ENCODE measurements at regions of chr11 and their contacts with region 1.

Region 1: DNA sequence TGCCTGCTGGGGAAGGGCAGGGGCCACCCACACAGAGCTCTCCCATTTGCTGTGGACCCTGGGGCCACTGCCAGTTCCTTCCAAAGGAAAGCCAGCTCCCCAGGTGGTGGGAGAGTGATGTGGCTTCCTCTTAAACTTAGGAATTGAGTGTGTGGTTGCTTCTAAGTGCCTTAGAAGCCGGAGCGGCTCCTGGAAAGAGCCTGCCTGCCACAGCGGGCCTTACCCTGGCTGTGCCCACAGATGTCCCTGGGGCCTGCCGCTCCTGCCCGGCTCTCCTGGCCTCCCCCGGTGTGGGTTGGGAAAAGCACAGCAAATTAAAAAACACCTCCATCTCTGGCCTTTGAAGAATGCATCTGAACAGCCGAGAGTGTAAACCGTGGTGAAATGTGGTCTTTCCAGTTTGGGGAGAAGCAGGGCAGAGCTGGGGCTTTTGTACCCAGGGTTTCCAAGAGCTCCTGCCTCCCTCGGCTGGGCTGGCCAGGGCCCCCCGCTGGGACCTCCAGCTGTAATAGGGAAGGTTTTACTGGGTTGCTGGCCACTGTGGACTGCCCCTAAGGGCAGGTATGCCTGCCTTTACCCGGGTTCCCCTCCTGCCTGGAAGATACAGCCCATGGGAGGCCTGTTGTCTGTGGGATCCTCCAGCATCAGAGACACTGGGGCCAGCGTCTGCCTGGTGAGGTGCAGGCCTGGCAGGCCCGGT is 30.2 kb downstream of the LRP5 start:
- DNase-seq: peak; percentile 96 to 99
- H3K4me3 ChIP-seq: peak overlapping the region; percentile 44; the same call in 1 of the 2 replicates
- H3K27ac ChIP-seq: peak overlapping the region; percentile 89
- H3K4me1 ChIP-seq: peaks cover 74% of the 10 kb centered on the region
- H3K27me3 ChIP-seq: no peaks in the 10 kb centered on the region
- CTCF ChIP-seq: no peak

Region 2: GRCh38 chr11:68271781-68272608 is 70.6 kb before region 1 on chr11 and contains the start of gene C11orf24:
- CTCF ChIA-PET with region 1: no interaction called
- POLR2A ChIA-PET with region 1: interaction called, 3 read pairs
- intact Hi-C with region 1: loop called (anchors 5 kb)
- DNase-seq: peak; percentile 91 to 98
- H3K4me3 ChIP-seq: peak within 1 kb of the TSS; percentile 77
- H3K27ac ChIP-seq: peak within 1 kb of the TSS; percentile 63
- H3K4me1 ChIP-seq: peaks cover 13% of the 10 kb centered on the region
- H3K27me3 ChIP-seq: no peaks in the 10 kb centered on the region
- CTCF ChIP-seq: no peak
- total RNA-seq, gene C11orf24: 27.2 and 37.7 TPM in 2 replicates

Region 3: DNA sequence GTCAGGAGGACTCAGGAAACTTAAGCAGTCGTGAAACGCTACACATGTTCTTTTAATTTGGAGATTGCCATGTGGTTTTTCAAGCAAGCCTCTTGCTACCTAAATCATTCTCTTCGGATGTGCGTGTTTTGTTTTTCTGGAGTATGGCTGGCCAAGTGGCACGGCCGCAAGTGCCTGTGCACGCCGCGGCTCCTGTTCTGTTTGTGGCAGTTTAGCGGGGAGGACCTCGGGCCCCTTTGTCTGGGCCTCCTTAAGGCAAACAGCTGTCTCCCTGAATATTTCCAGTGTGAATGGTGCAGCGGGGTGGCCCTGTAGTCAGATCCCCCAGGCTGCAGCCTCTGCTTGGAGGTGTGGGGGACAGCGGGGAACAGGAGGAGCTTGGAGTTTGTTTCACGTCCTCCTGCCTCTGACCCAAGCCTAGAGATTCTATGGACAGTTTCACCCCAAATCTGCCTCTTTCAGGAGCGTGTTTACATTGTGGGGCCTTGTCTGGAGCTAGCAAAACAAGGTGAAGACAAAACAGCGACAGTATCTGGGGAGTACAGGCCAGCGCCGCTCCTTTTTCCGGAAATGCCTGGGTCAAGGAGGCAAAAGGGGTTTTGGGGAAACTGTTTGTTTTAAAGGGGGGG is 28.9 kb before region 1 on chr11:
- CTCF ChIA-PET with region 1: no interaction called
- POLR2A ChIA-PET with region 1: interaction called, 5 read pairs
- intact Hi-C with region 1: loop called (anchors 1 kb)
- DNase-seq: no peak
- H3K4me3 ChIP-seq: peak overlapping the region; percentile 89
- H3K27ac ChIP-seq: peak overlapping the region; percentile 75
- H3K4me1 ChIP-seq: peaks cover 39% of the 10 kb centered on the region
- H3K27me3 ChIP-seq: no peaks in the 10 kb centered on the region
- CTCF ChIP-seq: no peak

Region 4: DNA sequence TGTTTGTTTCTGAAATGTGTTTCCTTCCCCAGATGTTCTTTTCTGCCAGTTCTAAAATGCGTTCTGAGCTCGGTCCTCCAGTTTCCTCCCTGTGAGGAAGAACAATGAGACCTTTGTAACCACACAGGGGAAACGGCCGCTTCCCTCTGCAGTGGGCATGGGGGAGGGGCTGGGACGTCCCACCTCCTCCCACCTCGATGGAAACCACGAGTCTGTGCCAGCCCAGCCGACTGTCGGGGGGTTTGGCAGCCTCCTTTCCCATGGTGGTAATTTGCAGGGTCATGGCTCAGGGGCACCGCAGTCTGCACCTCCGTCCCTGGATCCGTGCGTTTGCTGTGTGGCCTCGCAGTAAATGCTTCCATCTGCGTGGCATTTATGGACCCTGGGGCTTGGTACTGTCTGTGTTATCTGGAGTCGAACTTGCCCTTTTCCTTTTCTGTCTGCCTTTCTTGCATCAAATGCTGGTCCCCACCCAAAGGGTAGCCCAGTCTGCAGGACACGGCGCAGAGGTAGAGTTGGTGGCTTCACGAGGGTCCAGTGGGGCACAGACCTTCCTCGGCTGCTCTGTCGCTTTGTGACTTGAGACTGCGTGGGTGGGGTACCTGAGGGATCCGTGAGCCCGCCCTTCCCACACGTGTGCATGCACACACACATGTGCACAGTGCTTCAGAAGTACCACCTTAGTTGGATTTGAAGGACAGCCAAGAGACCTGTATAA is 14.1 kb before region 1 on chr11:
- CTCF ChIA-PET with region 1: no interaction called
- POLR2A ChIA-PET with region 1: no interaction called
- intact Hi-C with region 1: no loop called
- DNase-seq: no peak
- H3K4me3 ChIP-seq: no peak overlapping the region
- H3K27ac ChIP-seq: no peak overlapping the region
- H3K4me1 ChIP-seq: no peaks in the 10 kb centered on the region
- H3K27me3 ChIP-seq: no peaks in the 10 kb centered on the region
- CTCF ChIP-seq: no peak

Region 5: DNA sequence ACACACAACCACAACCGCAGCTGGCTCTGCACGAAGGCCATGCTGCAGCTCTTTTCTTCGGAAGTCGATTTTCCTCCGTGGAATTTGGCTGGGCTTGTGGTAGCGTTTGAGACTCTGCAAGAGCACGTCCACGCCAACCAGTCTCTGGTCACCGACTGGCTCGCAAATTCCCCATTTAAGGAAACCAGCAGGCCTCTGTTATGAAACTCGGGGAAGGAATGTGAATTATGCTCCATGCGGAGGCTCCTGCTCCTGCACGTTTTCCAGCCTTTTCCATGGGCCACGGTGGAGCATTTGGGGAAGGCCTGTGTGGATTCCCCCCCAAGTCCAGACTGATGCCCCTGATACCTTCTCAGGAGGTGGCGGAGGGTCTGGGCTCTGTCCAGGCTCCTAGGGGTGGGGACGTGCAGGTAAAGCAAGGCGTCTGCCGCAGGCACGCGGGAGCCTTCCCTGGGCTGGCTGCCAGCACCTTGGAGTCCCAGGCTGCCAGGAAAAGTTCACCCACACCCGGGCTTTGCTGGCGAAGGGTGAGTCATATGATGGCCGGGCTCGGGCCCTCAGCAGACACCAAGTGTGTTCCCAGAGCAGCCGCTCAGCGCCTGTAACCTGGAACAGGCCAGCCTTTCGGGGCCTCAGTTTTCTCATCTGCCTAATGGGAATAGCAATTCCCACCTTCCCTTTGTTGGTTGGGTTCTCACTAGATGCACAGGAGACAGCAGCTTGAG is 11.7 kb after region 1 on chr11:
- CTCF ChIA-PET with region 1: no interaction called
- POLR2A ChIA-PET with region 1: interaction called, 3 read pairs
- intact Hi-C with region 1: loop called (anchors 1 kb)
- DNase-seq: peak; percentile 91 to 96
- H3K4me3 ChIP-seq: peak overlapping the region; percentile 5; the same call in 1 of the 2 replicates
- H3K27ac ChIP-seq: peak overlapping the region; percentile 64
- H3K4me1 ChIP-seq: peaks cover 33% of the 10 kb centered on the region
- H3K27me3 ChIP-seq: no peaks in the 10 kb centered on the region
- CTCF ChIP-seq: no peak

Region 6: GRCh38 chr11:68370211-68371111 is 27.9 kb after region 1 on chr11:
- CTCF ChIA-PET with region 1: no interaction called
- POLR2A ChIA-PET with region 1: no interaction called
- intact Hi-C with region 1: no loop called
- DNase-seq: no peak
- H3K4me3 ChIP-seq: no peak overlapping the region
- H3K27ac ChIP-seq: no peak overlapping the region
- H3K4me1 ChIP-seq: no peaks in the 10 kb centered on the region
- H3K27me3 ChIP-seq: no peaks in the 10 kb centered on the region
- CTCF ChIP-seq: no peak